Mammary epithelial cell (primary cell): ENCODE measurements at regions of chr20 and their contacts with region 1.

Region 1: DNA sequence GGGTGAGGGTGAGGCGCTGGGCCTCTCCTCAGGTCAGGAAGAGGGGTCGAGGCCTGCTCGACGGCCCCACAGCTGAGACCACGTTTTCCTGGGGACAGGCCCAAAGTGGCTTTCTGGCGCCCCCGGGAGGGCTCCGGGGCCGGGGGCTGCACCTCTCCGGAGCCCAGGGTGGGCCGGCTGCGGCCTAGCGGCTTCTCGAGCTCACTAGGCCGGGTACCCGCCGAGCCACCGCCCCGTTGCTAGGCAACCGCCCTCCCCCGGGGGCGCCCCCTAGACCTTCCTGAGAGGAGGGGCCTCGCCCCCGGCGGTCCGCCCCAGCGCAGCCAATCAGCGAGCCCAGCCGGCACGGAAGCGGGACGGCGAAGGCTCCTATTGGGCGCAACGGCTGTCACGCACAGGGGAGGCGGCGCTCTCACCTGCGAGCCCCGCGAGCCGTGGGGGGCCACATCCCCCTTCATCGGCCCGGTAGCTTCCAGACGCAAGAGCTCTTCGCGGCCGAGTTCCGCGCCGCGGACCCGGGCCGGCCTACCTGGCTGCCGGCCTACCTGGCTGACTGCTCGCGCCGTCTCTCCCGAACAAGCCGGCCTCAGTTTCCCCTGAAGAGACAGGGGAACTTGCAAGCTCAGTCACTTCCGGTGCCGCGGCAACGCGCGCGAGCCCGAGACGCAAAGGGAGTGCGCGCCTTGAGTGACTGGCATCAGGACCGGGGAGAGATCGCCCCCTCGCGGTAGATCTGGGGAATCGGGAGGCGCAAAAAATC is 831 bp upstream of the BCL2L1 start:
- DNase-seq: peak; percentile 96
- H3K4me3 ChIP-seq: peak overlapping the region; percentile 78 to 89 (median 86)
- H3K27ac ChIP-seq: peak overlapping the region; percentile 89
- H3K4me1 ChIP-seq: peaks cover 26% of the 10 kb centered on the region
- H3K27me3 ChIP-seq: no peaks in the 10 kb centered on the region
- CTCF ChIP-seq: peak; percentile 89 to 93

Region 2: GRCh38 chr20:31514159-31515071 is 209.1 kb before region 1 on chr20 and contains the start of gene HM13:
- CTCF ChIA-PET with region 1: no interaction called
- dilution Hi-C with region 1: no loop called
- in situ Hi-C with region 1: no loop called
- intact Hi-C with region 1: no loop called
- DNase-seq: peak; percentile 88
- H3K4me3 ChIP-seq: peak within 1 kb of the TSS; percentile 84 to 100 (median 99)
- H3K27ac ChIP-seq: peak within 1 kb of the TSS; percentile 77
- H3K4me1 ChIP-seq: peaks cover 17% of the 10 kb centered on the region
- H3K27me3 ChIP-seq: no peaks in the 10 kb centered on the region
- CTCF ChIP-seq: peak; percentile 86 to 91
- total RNA-seq, gene HM13: 65.2 to 184 TPM

Region 3: DNA sequence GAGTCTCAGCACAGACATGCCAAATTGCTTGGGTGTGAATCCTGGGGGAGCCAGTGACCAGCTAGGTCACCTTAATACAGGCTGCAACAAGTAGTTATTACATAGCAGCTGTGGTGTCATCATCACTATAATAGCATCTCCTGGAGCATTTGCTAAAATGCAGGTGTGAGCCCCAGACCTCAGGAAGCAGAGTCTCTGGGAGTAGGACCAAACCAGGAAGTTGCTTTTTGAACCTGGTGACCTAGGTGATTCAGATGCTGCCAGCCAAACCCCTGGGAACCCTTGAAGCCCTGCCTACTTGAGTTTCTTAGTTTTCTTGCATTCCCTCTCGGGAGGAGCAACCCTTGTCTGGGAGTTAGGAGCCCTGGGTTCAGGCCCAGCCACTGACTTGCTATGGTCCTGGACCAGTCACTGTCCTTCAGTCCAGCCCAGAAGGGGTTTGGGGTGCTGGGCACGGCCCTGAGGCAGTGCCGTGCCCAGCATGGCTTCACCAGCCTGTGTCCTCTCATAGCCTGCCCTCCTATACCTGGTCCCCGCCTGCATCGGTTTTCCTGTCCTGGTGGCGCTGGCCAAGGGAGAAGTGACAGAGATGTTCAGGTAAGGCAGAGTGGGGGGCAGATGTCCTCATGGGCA is 157.7 kb before region 1 on chr20:
- CTCF ChIA-PET with region 1: no interaction called
- dilution Hi-C with region 1: loop called (anchors 25 kb)
- in situ Hi-C with region 1: loop called in 1 of 2 experiments (anchors 25 kb)
- intact Hi-C with region 1: loop called (anchors 1 kb)
- DNase-seq: peak; percentile 96
- H3K4me3 ChIP-seq: peak overlapping the region in 2 of 3 experiments; percentile 2 to 16
- H3K27ac ChIP-seq: peak overlapping the region; percentile 78
- H3K4me1 ChIP-seq: peaks cover 87% of the 10 kb centered on the region
- H3K27me3 ChIP-seq: no peaks in the 10 kb centered on the region
- CTCF ChIP-seq: no peak

Region 4: GRCh38 chr20:31630187-31630790 is 93.2 kb before region 1 on chr20:
- CTCF ChIA-PET with region 1: interaction called, 36 read pairs
- dilution Hi-C with region 1: no loop called
- in situ Hi-C with region 1: no loop called
- intact Hi-C with region 1: loop called (anchors 1 kb)
- DNase-seq: peak; percentile 48
- H3K4me3 ChIP-seq: no peak overlapping the region
- H3K27ac ChIP-seq: no peak overlapping the region
- H3K4me1 ChIP-seq: no peaks in the 10 kb centered on the region
- H3K27me3 ChIP-seq: no peaks in the 10 kb centered on the region
- CTCF ChIP-seq: no peak

Region 5: DNA sequence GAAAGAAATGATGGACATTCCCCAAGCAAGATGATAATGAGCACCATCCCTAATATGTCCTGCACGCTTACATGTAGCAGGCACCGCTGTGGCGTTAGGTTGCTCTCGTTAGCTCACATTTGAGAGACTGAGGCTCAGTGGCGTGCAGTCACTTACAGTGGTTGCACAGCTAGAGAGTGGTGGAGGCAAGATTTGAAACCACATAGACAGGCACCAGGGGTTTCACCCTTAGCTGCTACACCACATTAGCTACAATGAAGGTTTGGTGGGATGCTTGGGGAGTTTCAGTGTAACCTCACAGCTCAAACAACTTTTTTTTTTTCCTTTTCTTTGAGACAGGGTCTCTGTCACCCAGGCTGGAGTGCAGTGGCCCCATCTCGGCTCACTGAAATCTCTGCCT is 82.1 kb before region 1 on chr20:
- CTCF ChIA-PET with region 1: no interaction called
- dilution Hi-C with region 1: no loop called
- in situ Hi-C with region 1: no loop called
- intact Hi-C with region 1: no loop called
- DNase-seq: no peak
- H3K4me3 ChIP-seq: no peak overlapping the region
- H3K27ac ChIP-seq: no peak overlapping the region
- H3K4me1 ChIP-seq: no peaks in the 10 kb centered on the region
- H3K27me3 ChIP-seq: peaks cover 4% of the 10 kb centered on the region
- CTCF ChIP-seq: no peak

Region 6: DNA sequence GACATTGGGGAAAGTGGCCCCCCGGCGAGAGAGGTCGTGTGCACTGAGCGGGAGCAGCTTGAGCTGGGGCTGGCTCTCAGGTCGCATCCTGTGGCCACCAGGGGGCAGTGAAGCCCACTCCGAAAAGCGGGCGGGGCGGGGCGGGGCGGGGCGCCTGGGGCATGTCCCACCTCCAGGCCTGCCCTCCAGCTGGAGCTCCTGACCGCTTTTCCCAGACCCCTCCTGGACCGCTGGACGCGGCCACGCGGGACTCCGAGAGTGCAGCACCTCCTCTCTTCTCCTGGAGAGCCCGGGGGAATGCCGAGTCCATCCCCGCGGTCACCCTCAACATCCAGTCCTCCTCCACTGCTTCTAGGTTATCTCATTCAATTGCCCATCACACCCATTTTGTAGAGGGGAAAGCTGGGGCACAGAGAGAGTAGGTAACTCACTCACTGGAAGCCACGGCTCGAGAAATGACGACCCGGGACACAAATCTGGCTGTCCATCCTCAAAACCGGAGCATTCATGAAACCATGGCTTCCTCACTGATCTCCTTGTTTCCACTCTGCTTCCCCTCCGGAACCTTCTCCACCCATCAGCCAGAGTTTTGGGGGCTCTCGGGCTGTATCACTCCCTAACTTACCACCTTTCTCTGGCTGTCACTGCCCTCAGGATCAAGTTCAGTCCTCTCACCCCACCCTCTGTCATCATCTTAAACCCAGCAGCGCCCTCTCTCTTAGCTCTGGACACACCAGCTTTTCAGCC is 61.7 kb before region 1 on chr20:
- CTCF ChIA-PET with region 1: interaction called, 14 read pairs
- dilution Hi-C with region 1: loop called (anchors 10 kb)
- in situ Hi-C with region 1: no loop called
- intact Hi-C with region 1: loop called (anchors 1 kb)
- DNase-seq: peak; percentile 62
- H3K4me3 ChIP-seq: peak overlapping the region in 1 of 3 experiments; percentile 38
- H3K27ac ChIP-seq: peak overlapping the region; percentile 24
- H3K4me1 ChIP-seq: peaks cover 9% of the 10 kb centered on the region
- H3K27me3 ChIP-seq: no peaks in the 10 kb centered on the region
- CTCF ChIP-seq: peak; percentile 44 to 74

Region 7: DNA sequence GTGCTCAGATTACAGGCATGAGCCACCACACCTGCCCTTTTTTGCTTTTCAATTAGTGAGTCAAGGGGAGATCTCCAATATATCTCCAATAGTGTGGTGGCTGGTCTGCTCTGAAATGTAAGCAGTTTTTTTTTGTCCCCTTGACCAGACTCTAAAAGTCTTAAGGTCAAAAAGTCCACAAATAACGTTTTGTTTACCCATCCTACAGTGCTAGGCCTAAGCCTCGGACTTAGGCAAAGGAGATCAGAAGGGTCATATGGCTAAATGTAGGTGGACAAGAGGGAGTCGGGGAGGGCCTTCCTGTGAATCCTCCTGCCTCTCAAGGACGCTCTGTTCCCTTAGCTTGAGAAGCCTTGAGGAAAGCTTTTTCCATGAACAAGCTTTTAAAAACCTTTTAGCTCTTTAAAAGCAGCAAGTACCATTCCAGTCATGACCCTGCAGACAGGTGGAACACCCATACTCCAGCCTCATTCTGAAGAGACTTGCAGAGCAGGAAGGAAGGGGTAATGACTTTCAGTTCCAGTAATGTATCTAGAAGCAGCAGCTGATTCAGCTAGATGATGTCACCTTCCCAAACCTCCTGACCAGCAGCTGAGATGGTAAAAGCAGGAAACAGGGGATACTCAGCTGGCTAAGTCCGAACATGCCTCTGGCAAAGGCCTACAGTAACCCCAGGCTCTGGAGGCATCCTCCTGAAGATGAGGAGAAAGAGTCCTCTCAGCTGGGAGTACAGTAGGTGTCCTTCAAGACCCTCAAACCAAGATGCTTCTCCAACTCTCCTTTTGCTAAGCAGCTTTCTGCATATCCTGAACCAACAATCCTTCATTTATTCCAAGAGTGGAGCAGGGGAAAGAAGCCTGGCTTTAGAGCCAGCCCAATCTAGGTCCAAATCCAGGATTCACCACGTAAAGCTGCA is 24.4 kb before region 1 on chr20:
- CTCF ChIA-PET with region 1: interaction called, 6 read pairs
- dilution Hi-C with region 1: no loop called
- in situ Hi-C with region 1: no loop called
- intact Hi-C with region 1: loop called (anchors 1 kb)
- DNase-seq: peak; percentile 98
- H3K4me3 ChIP-seq: no peak overlapping the region
- H3K27ac ChIP-seq: peak overlapping the region; percentile 82
- H3K4me1 ChIP-seq: peaks cover 48% of the 10 kb centered on the region
- H3K27me3 ChIP-seq: no peaks in the 10 kb centered on the region
- CTCF ChIP-seq: no peak

Region 8: DNA sequence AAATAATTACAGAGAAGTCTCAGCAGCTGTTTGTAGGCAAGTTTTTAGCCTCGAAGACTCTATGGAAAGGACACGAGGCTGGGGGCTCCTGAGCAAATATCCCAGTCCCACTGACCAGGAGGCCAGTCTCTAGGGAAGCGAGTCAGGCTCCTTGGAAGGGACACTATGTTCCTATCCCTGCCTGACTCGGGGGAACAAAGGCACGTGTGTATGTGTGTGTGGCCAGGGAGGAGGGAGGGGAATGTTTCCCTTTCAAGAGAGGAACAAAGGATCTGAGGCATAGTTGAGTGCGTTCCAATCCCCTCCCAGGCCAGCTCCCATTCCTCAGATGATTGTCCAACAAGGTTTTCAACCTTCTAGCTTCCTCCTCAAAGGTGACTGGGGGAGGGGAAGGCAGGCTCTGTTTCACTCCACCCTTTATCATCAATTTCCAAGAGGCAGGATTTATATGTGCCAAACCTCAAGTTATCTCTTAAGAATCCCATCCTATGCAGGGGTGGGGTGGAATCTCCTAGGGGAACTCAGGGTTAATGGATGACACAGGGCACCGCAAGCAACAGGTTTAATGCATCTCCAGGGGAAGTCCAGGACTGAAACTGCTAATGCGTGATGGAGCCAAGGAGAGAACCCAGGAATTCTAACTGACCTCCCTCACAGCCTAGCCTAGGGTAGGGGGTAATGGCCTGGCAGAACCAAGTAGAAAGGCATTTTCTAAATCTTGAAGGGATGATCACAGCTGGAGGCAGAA is 10.8 kb before region 1 on chr20:
- CTCF ChIA-PET with region 1: interaction called, 5 read pairs
- dilution Hi-C with region 1: no loop called
- in situ Hi-C with region 1: no loop called
- intact Hi-C with region 1: loop called (anchors 1 kb)
- DNase-seq: peak; percentile 85
- H3K4me3 ChIP-seq: peak overlapping the region in 1 of 3 experiments; percentile 3
- H3K27ac ChIP-seq: peak overlapping the region; percentile 95
- H3K4me1 ChIP-seq: peaks cover 85% of the 10 kb centered on the region
- H3K27me3 ChIP-seq: no peaks in the 10 kb centered on the region
- CTCF ChIP-seq: no peak